Panc1 (cell line): ENCODE measurements at regions of chr3 and their contacts with region 1.

Region 1: GRCh38 chr3:128665362-128666038 is 14.9 kb upstream of the RPN1 start:
- DNase-seq: no peak
- ATAC-seq: peak; percentile 71
- H3K4me3 ChIP-seq: peak overlapping the region; percentile 22 to 45
- H3K27ac ChIP-seq: no peak overlapping the region
- H3K4me1 ChIP-seq: peaks cover 3% of the 10 kb centered on the region; the same call in 1 of the 2 replicates
- H3K27me3 ChIP-seq: no peaks in the 10 kb centered on the region
- CTCF ChIP-seq: no peak

Region 2: GRCh38 chr3:128617557-128618397 is 47.7 kb before region 1 on chr3:
- CTCF ChIA-PET with region 1: no interaction called
- POLR2A ChIA-PET with region 1: no interaction called
- in situ Hi-C with region 1: no loop called
- intact Hi-C with region 1: no loop called
- DNase-seq: peak; percentile 78
- ATAC-seq: peak; percentile 89
- H3K4me3 ChIP-seq: peak overlapping the region; percentile 42 to 68
- H3K27ac ChIP-seq: peak overlapping the region; percentile 72
- H3K4me1 ChIP-seq: 0 out of 2 replicates have a peak, but pooled peaks cover 3% of the 10 kb centered on the region
- H3K27me3 ChIP-seq: no peaks in the 10 kb centered on the region
- CTCF ChIP-seq: peak; percentile 98

Region 3: DNA sequence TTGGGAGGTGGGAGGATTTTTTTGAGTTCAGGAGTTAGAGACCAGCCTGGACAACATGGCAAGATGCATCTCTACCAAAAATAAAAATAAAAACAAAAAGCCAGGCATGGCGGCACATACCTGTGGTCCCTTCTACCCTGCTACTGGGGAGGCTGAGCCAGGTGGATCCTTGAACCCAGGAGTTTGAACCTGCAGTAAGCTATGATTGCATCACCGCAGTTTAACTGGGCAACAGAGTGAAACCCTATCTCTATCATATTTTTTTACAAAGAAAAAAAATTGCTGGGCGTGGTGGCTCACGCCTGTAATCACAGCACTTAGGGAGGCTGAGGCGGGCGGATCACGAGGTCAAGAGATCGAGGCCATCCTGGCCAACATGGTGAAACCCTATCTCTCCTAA is 21.0 kb after region 1 on chr3:
- CTCF ChIA-PET with region 1: no interaction called
- POLR2A ChIA-PET with region 1: no interaction called
- in situ Hi-C with region 1: no loop called
- intact Hi-C with region 1: no loop called
- DNase-seq: no peak
- ATAC-seq: no peak
- H3K4me3 ChIP-seq: no peak overlapping the region
- H3K27ac ChIP-seq: no peak overlapping the region
- H3K4me1 ChIP-seq: peaks cover 4% of the 10 kb centered on the region
- H3K27me3 ChIP-seq: no peaks in the 10 kb centered on the region
- CTCF ChIP-seq: no peak

Region 4: DNA sequence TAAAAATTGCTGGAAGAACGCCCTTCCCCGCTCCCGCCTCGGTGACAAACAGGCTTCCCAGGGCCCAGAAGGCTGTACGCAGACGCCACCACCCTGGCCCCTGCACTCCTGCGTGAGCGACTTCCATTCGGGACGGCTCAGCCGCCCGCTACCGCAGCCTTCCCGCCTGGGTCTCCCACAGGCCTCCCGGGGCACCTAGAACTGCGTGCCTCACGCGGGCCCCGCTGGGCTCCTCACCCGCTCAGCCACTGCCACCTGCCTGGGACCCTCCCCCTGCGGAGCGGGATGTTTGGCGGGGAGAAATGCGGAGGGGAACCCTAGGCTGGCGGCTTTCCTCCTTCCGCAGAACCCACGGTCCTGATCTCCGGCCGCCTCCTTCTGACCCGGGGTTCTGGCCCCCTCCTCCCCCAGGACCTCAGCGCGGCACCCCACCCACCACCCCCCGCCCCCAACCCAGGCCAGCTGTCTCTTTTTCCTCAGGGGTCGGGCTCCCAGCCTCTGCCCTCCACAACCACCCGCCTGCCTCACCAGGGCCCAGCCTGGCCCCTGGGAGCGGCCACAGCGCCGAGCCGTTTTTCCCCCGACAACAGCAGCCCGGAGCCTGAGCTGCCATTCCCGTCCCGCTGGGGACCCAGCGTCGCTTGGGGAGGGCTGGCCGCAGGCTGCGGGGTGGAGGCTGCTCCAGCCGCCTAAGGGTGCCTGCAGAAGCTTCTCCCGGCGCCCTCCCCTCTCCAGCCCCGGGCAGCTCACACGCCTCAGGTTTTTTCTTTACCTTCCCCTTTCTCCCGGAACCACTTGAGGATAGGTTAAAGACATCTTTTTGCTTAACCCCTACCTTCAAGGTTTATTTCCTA is 32.9 kb after region 1 on chr3:
- CTCF ChIA-PET with region 1: no interaction called
- POLR2A ChIA-PET with region 1: no interaction called
- in situ Hi-C with region 1: no loop called
- intact Hi-C with region 1: loop called (anchors 1 kb)
- DNase-seq: no peak
- ATAC-seq: peak; percentile 89
- H3K4me3 ChIP-seq: peak overlapping the region; percentile 46 to 73
- H3K27ac ChIP-seq: peak overlapping the region; percentile 70
- H3K4me1 ChIP-seq: 0 out of 2 replicates have a peak, but pooled peaks cover 2% of the 10 kb centered on the region
- H3K27me3 ChIP-seq: no peaks in the 10 kb centered on the region
- CTCF ChIP-seq: no peak